ENCODE measurements at regions of chr18 and their contacts with region 1.

Region 1: DNA sequence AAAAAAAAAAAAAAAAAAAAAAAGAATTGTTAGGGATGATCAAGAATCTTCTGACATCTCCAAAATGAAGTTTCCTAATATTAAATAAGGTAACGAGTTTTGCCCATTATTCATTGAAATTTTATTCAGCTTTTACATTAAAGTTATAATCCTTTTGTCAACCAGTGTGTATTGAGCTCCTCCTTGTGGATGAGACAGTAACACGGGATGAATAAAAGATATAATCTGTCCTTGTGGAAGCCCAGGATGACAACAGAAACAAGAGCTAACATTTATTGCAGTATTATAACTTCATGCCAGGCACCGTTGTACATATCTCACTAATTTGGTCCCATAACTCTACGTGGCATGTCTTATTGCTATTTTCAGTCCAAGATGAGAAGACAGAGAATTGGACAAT is 33.4 kb upstream of the SERPINB7 start:
- DNase-seq: no peak
- H3K4me3 ChIP-seq: no peak overlapping the region
- CTCF ChIP-seq: peak; percentile 55

Region 2: GRCh38 chr18:63539904-63540510 is 201.8 kb before region 1 on chr18:
- CTCF ChIA-PET with region 1: interaction called, 14 read pairs
- POLR2A ChIA-PET with region 1: no interaction called
- DNase-seq: peak; percentile 59
- H3K4me3 ChIP-seq: no peak overlapping the region
- CTCF ChIP-seq: no peak

Region 3: DNA sequence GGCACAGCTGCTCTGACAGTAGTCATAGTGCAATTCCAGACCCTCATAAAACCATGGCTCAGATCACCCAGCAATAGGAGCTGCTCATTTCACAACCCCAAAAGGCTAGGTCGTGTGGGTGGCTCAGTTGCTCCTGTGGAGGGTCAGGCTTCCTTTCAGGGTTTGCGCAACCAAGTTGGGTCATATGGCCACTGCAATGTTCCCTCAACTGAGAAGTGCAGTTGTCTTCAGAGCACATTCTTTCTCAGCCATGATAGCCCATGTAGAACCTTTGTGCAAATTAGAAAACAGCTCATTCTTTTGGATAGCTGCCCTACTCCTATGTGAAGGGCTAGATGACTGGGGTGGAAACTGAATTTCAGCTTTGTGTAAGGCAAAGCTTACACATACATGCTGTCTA is 151.4 kb before region 1 on chr18:
- CTCF ChIA-PET with region 1: interaction called, 195 read pairs
- POLR2A ChIA-PET with region 1: no interaction called
- DNase-seq: no peak
- H3K4me3 ChIP-seq: no peak overlapping the region
- CTCF ChIP-seq: no peak

Region 4: GRCh38 chr18:63753676-63754075 is 11.9 kb after region 1 on chr18:
- CTCF ChIA-PET with region 1: interaction called, 17 read pairs
- POLR2A ChIA-PET with region 1: no interaction called
- DNase-seq: no peak
- H3K4me3 ChIP-seq: no peak overlapping the region
- CTCF ChIP-seq: no peak

Region 5: DNA sequence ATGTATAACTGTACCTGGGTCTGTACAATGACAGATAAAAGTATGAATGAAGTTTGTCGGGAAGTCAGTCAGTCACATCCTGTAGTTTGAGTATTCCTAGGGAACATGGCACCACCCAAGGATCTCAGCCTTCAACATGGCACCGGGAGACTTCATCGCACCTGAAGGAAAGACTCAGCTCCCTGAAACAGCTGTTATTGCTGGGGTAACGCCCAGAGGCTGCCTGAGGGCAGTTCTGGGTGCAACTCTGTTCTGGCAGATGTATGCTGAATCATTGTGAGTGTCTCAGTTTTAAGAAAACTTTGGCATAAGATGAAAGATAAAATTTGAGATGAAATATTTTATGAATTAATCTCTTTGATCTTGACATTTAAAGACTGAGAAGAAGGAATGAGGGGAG is 95.8 kb after region 1 on chr18:
- CTCF ChIA-PET with region 1: interaction called, 127 read pairs
- POLR2A ChIA-PET with region 1: no interaction called
- DNase-seq: no peak
- H3K4me3 ChIP-seq: no peak overlapping the region
- CTCF ChIP-seq: no peak

Region 6: DNA sequence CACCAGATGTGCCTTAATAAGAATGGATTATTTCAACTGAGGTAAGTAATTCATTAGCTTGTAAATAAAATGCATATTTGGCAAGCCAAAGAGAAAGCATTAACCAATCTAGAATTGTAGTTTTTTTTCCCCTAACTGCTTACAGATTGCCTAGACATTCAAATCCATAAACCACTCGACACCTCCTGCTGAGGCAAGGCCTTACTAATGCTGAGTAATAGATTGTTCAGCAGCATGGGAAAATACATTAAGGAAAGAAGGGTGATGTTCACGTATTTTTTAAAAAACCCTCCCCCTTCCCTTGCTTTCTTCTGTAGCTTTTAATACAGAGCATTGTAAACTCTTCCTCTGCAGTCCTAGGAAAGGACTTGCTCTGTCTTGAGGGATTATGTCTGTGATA is 424.1 kb after region 1 on chr18:
- CTCF ChIA-PET with region 1: no interaction called
- POLR2A ChIA-PET with region 1: no interaction called
- DNase-seq: peak; percentile 0
- H3K4me3 ChIP-seq: no peak overlapping the region
- CTCF ChIP-seq: no peak